ENCODE measurements at regions of chr11 and their contacts with region 1.

Region 1: GRCh38 chr11:17014838-17015626 is 818 bp upstream of the PLEKHA7 start:
- DNase-seq: peak; percentile 65
- ATAC-seq: peak; percentile 48
- H3K4me3 ChIP-seq: peak overlapping the region; percentile 86 to 91 (median 91)
- H3K27ac ChIP-seq: peak overlapping the region; percentile 93
- H3K4me1 ChIP-seq: peaks cover 52% of the 10 kb centered on the region
- H3K27me3 ChIP-seq: no peaks in the 10 kb centered on the region
- CTCF ChIP-seq: peak; percentile 71
- EP300 ChIP-seq: no peak
- POLR2A ChIP-seq: no peak
- RAD21 ChIP-seq: peak; percentile 38; the same call in 1 of the 2 replicates

Region 2: DNA sequence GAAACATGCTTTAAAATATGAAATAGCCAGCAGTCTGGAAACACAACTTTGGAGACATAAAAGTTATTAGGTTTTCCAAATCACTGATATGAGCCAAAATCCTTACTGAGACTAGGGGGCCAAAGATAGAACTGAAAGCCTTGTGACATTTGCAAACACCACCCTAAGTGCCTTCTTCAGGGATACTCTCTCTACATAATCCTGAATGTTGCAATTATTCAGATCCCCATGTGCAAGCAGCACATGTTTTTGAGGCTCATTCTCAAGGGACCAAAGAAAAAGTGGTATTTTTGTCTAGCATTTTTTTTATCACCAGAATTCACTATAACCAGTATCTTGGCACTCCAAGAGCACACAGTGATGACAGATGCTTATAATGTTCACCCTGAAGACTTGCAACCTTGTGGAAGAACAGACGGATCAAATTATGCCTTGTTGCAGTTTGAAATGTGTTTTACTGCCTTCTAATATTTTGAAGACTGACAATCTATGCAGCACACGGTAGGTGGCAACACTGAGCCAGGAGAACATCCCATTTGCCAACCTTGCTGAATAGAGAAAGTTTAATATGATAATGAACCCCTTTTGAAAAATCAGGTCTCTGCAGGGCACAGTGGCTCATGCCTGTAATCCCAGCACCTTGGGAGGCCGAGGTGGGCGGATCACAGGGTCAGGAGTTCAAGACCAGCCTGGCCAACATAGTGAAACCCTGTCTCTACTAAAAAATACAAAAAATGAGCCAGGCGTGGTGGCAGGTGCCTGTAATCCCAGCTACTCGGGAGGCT is 79.3 kb before region 1 on chr11:
- CTCF ChIA-PET with region 1: no interaction called
- POLR2A ChIA-PET with region 1: no interaction called
- in situ Hi-C with region 1: no loop called
- intact Hi-C with region 1: no loop called
- DNase-seq: no peak
- ATAC-seq: peak; percentile 63
- H3K4me3 ChIP-seq: no peak overlapping the region
- H3K27ac ChIP-seq: no peak overlapping the region
- H3K4me1 ChIP-seq: no peaks in the 10 kb centered on the region
- H3K27me3 ChIP-seq: no peaks in the 10 kb centered on the region
- CTCF ChIP-seq: peak; percentile 70
- EP300 ChIP-seq: no peak
- POLR2A ChIP-seq: no peak
- RAD21 ChIP-seq: 0 out of 2 replicates have a peak, but pooled peaks have one; percentile 37

Region 3: DNA sequence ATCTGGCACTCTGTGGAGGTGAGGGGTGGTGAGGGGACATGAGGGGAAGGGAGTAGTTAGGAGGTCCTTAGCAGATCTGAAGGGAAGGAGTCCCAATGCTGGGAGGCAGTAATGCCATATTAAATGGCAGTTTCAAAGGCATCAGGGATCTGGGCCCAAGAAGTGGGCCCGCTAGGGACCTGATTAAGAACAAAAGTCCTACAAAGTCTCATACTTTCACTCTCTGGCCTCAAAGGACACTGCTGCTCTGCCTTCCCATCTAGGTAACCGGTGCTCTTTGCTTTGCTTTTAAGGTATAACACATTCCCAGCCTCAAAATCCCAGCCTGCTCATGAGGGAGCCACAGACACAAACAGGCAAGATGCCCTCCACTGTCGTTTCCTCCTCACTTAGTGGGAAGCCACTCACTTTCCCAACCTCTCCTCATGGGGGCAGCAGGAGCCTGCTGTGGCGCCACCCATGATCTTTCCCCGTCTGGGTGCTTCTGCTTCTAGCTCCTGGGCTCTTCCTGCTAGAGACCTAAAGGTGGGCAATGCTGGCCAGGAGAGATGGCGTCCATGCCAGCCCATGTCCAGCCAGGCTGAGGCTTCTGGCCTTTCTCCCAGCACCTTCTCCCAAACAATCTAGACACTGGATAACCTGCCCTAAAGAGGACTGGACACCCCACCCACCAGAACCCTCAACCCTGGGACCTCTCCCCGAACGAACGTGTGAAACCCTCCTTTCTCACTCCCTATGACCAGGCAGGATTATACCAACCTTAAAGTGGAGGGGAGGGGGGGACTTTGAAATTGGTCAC is 69.2 kb before region 1 on chr11:
- CTCF ChIA-PET with region 1: interaction called, 7 read pairs
- POLR2A ChIA-PET with region 1: interaction called, 6 read pairs
- in situ Hi-C with region 1: loop called (anchors 5 kb)
- intact Hi-C with region 1: loop called (anchors 1 kb)
- DNase-seq: peak; percentile 68
- ATAC-seq: peak; percentile 99
- H3K4me3 ChIP-seq: no peak overlapping the region
- H3K27ac ChIP-seq: no peak overlapping the region
- H3K4me1 ChIP-seq: peaks cover 10% of the 10 kb centered on the region
- H3K27me3 ChIP-seq: no peaks in the 10 kb centered on the region
- CTCF ChIP-seq: peak; percentile 94
- EP300 ChIP-seq: no peak
- POLR2A ChIP-seq: no peak
- RAD21 ChIP-seq: peak; percentile 94

Region 4: DNA sequence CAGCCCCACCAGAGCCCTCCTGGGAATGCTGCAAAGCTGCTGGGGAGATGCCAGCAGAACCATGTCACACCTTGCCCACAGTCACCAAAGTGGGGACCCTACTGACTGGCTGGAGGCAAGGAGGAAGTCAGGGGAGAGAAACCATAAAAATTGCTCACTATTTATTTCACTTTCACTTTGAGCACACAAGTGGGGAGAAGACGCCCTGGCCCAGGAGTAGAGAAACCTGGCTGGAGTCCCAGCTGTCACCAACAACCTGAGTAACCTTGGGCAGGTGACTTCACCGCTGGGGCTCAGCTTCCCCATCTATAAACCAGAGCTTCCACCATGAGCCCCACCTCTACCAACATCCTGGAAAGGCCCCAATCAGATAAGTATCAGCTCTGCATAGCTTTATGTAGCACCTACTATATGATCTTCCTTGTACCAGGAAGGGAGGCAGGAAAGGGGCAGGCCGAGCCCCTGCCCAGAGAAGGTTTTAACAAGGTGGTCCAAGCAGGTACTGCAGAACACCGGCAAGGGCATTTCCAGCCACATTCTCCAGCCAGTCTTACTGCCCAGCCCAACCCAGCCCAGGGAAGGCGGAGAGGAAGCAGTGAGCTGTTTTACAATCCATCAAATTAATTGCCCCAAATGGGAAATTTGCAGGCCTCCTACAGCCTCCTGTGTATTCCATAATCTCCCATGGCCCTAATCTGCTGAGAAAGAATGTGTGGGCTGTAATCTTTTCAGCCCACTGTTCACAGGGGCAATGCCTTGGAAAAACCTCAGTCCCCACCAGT is 28.4 kb before region 1 on chr11:
- CTCF ChIA-PET with region 1: no interaction called
- POLR2A ChIA-PET with region 1: interaction called, 35 read pairs
- in situ Hi-C with region 1: no loop called
- intact Hi-C with region 1: loop called (anchors 1 kb)
- DNase-seq: no peak
- ATAC-seq: no peak
- H3K4me3 ChIP-seq: no peak overlapping the region
- H3K27ac ChIP-seq: peak overlapping the region; percentile 4
- H3K4me1 ChIP-seq: peaks cover 64% of the 10 kb centered on the region
- H3K27me3 ChIP-seq: no peaks in the 10 kb centered on the region
- CTCF ChIP-seq: no peak
- EP300 ChIP-seq: no peak
- POLR2A ChIP-seq: no peak
- RAD21 ChIP-seq: no peak

Region 5: DNA sequence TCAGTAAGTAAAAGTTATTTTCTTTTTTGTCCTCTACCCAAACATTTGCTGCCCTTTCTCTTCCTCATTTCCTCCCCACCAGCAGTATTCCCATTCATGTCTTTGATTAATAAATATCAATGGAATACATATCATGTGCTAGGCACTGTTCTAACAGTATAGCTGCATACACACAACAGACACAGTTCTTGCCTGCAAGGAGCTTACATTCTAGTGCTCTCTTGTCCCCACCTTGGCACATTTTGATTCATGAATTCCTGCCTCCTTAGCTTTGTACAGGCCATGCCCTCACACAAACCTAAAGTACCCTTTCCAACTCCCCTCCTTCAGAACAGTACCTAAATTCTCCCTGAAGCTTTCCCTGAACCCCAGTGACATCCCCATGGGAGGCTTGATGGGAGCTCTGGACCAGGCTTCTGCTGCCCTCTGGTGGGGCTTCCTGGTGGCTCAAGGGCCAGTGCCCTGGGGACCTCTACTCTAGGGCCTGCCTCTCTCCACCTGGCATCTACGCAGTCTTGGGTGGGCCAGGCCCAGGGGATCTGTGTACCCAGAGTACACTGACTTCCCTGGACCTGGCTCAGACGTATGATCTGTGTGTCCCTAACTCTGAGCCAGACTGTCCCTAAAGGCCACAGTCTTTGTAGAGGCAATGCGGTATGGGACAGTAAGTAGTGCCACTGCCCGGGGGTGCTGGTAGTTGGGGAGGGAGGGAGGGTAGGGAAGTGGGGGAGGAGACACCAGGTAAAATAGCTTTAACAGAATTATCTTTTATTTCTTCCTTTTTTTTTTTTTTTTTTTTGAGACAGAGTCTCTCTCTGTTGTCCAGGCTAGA is 48.4 kb after region 1 on chr11:
- CTCF ChIA-PET with region 1: interaction called, 6 read pairs
- POLR2A ChIA-PET with region 1: interaction called, 9 read pairs
- in situ Hi-C with region 1: loop called (anchors 5 kb)
- intact Hi-C with region 1: loop called (anchors 5 kb)
- DNase-seq: peak; percentile 54
- ATAC-seq: peak; percentile 99
- H3K4me3 ChIP-seq: no peak overlapping the region
- H3K27ac ChIP-seq: no peak overlapping the region
- H3K4me1 ChIP-seq: no peaks in the 10 kb centered on the region
- H3K27me3 ChIP-seq: no peaks in the 10 kb centered on the region
- CTCF ChIP-seq: peak; percentile 95
- EP300 ChIP-seq: no peak
- POLR2A ChIP-seq: no peak
- RAD21 ChIP-seq: peak; percentile 95

Region 6: GRCh38 chr11:17197431-17197898 is 182.4 kb after region 1 on chr11:
- CTCF ChIA-PET with region 1: no interaction called
- POLR2A ChIA-PET with region 1: no interaction called
- in situ Hi-C with region 1: no loop called
- intact Hi-C with region 1: loop called (anchors 10 kb)
- DNase-seq: peak; percentile 93
- ATAC-seq: peak; percentile 96
- H3K4me3 ChIP-seq: peak overlapping the region in 1 of 3 experiments; percentile 33; a peak in 1 of 6 replicates
- H3K27ac ChIP-seq: peak overlapping the region; percentile 72
- H3K4me1 ChIP-seq: peaks cover 40% of the 10 kb centered on the region
- H3K27me3 ChIP-seq: no peaks in the 10 kb centered on the region
- CTCF ChIP-seq: no peak
- EP300 ChIP-seq: peak in 1 of 2 experiments; percentile 56; a peak in 1 of 4 replicates
- POLR2A ChIP-seq: no peak
- RAD21 ChIP-seq: no peak

Measured in HepG2 (cell line).